Activated naive CD4-positive, alpha-beta T cell treated with anti-CD3 and anti-CD28 coated beads for 36 hours (primary cell): ENCODE measurements at regions of chr9 and their contacts with region 1.

Region 1: DNA sequence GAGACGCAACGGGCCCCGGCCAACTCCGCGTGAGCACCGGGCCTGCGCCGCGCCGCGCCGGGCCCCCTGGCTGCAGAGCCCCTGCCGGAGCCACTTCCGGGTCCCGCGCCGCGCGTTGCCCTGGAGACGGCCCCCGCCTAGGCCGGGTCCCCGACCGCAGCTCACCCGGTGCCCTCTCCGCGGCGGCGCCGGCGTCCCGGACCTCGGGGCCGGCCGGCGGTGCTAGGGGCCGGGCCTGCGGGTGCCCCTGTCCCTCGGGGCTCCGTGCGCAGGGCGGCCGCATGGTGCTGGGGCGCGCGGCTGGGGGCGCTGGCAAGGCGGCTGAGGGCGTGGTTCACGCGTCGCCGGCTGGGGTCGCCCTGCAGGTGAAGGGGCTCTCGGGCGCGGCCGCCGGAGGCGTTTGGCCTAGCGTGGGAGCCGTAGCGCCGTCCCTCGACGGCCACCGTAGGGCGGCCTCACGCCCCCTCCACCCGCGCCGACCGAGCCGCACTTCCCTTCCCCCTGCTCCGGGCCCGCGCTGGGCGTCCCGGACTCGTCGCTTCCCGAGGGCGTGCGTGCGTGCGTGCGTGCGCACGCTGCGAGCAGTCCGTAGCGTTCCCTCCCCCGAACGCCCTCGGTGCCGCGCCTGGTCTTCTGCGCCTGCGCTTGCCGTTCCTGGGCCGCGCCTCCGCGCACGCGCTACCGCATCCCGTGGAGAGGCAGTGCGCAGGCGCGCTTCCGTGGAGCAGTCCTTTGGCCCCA is at the start of gene TMEM250:
- DNase-seq: peak; percentile 96
- H3K4me3 Mint-ChIP-seq: peak within 1 kb of the TSS; percentile 78
- H3K27ac Mint-ChIP-seq: peak within 1 kb of the TSS; percentile 80
- H3K4me1 Mint-ChIP-seq: peaks cover 37% of the 10 kb centered on the region
- H3K27me3 Mint-ChIP-seq: no peaks in the 10 kb centered on the region
- total RNA-seq, gene TMEM250: 20.7 to 22.2 TPM

Region 2: DNA sequence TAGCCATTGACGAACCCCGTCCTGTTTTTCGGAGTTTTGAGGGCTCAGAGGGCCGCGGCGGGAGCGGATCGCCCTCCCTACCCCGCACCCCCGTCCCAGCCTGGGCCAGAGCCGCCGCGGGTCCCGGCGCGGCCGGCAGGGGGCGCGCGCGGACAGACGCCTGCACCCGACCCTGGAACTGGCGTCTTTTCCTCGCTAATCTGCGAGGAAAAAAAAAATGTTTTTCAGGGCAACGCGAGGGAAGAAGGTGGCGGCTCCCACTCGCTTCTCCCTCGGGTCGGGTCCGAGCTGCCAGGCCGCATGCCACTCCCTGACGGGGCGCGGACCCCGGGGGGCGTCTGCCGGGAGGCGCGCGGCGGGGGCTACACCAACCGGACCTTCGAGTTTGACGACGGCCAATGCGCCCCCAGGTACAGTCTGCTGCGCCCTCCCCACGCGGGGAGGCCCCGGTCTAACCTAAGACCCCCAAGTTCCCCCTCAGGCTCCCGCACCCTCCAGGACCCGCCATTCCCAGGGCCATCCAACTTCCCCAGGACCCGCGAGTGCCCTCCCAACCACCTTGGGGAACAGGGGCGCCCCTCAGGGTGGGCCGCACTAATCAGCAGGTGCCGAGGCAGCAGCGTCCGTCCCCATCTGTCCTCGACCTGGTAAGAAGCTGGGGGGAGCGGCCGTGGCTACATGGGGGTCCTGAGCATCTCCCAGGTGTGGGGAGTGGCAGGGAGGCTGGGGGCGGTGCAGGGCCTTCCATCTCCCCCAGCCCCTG is 416.4 kb before region 1 on chr9 and contains the start of gene KCNT1:
- CTCF ChIA-PET with region 1: no interaction called
- intact Hi-C with region 1: loop called (anchors 5 kb)
- DNase-seq: peak; percentile 62
- H3K4me3 Mint-ChIP-seq: no peak within 1 kb of the TSS
- H3K27ac Mint-ChIP-seq: no peak within 1 kb of the TSS
- H3K4me1 Mint-ChIP-seq: no peaks in the 10 kb centered on the region
- H3K27me3 Mint-ChIP-seq: peaks cover 5% of the 10 kb centered on the region
- total RNA-seq, gene KCNT1: not detected

Region 3: GRCh38 chr9:135857371-135857786 is 261.1 kb before region 1 on chr9:
- CTCF ChIA-PET with region 1: interaction called, 10 read pairs
- intact Hi-C with region 1: no loop called
- DNase-seq: no peak
- H3K4me3 Mint-ChIP-seq: no peak overlapping the region
- H3K27ac Mint-ChIP-seq: no peak overlapping the region
- H3K4me1 Mint-ChIP-seq: peaks cover 2% of the 10 kb centered on the region
- H3K27me3 Mint-ChIP-seq: no peaks in the 10 kb centered on the region

Region 4: GRCh38 chr9:135907431-135908092 is 210.9 kb before region 1 on chr9 and contains the start of gene CAMSAP1:
- CTCF ChIA-PET with region 1: no interaction called
- intact Hi-C with region 1: loop called (anchors 1 kb)
- DNase-seq: peak; percentile 94
- H3K4me3 Mint-ChIP-seq: peak within 1 kb of the TSS; percentile 80
- H3K27ac Mint-ChIP-seq: peak within 1 kb of the TSS; percentile 89
- H3K4me1 Mint-ChIP-seq: peaks cover 53% of the 10 kb centered on the region
- H3K27me3 Mint-ChIP-seq: no peaks in the 10 kb centered on the region
- total RNA-seq, gene CAMSAP1: 32.6 to 35.2 TPM

Region 5: DNA sequence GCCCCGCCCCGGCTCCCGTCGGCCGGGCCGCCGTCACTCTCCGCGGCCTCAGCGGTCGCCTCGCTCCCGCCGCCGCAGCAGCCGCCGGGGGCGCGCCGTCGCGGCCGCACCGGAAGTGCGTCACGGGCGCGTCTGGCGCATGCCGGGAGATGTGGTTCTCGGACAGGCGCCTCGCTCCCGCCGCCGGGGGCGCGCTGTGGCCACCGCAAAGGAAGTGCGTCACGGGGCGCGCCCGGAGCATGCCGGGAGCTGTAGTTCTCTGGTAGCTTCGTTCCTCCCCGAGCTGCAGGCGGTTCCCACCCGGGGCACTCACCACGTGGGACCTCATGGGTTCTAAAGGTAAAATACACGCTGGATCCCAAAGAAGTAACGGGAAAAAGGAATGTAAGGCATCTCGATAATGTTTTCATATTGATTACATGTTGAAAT is 157.2 kb before region 1 on chr9 and contains the start of gene UBAC1:
- CTCF ChIA-PET with region 1: interaction called, 69 read pairs
- intact Hi-C with region 1: loop called (anchors 1 kb)
- DNase-seq: peak; percentile 94
- H3K4me3 Mint-ChIP-seq: peak within 1 kb of the TSS; percentile 87
- H3K27ac Mint-ChIP-seq: peak within 1 kb of the TSS; percentile 50
- H3K4me1 Mint-ChIP-seq: peaks cover 32% of the 10 kb centered on the region
- H3K27me3 Mint-ChIP-seq: no peaks in the 10 kb centered on the region
- total RNA-seq, gene UBAC1: 37.2 to 40.0 TPM

Region 6: DNA sequence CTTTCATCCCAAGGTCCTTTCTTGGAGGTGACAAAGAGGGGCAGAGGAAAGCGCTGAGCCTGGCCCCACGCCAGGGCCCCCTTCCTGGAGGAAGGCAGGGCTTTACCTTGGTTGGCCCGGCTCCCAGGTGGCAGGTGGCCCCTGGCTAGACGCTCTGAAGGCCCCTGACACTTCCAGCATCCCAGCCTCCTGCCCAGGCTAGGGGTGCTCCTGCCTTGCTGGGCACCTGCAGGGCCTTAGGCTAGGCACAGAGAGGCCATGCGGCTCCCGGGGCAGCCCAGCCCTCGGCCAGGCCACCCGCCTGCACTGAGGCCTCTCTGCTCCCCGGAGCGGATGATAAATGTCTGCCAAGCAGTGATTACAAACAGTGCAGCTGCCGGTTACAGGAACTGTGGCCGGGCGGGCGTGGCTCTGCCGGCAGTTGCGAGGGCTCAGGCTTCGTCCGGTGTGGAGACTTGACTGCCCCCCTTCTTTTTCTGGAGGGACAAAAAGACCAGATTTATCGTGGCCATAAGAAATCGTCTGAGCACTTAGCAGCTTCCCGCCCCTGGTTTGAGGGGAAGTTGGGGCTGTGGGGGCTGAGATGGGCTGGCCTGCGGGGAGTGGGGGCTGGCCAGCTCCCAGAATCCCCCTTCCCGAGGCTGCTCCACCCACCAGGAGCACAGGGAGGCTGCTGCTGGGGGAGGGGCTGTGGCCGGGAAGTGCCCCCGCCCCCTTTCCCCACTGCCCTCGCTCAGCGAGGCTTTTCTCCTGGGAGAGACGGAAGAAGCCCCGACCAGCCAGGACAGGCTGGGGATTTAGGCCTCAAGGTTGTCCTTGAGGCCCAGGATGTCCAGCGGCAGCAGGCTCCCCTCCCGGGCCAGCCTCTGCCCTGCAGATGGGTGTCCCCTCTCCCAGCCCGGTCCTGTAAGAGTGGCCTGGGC is 125.7 kb before region 1 on chr9:
- CTCF ChIA-PET with region 1: no interaction called
- intact Hi-C with region 1: no loop called
- DNase-seq: peak; percentile 58
- H3K4me3 Mint-ChIP-seq: no peak overlapping the region
- H3K27ac Mint-ChIP-seq: no peak overlapping the region
- H3K4me1 Mint-ChIP-seq: peaks cover 20% of the 10 kb centered on the region
- H3K27me3 Mint-ChIP-seq: no peaks in the 10 kb centered on the region

Region 7: GRCh38 chr9:136093995-136094881 is 24.3 kb before region 1 on chr9:
- CTCF ChIA-PET with region 1: interaction called, 43 read pairs
- intact Hi-C with region 1: loop called (anchors 1 kb)
- DNase-seq: peak; percentile 64
- H3K4me3 Mint-ChIP-seq: peak overlapping the region; percentile 67
- H3K27ac Mint-ChIP-seq: no peak overlapping the region
- H3K4me1 Mint-ChIP-seq: peaks cover 17% of the 10 kb centered on the region
- H3K27me3 Mint-ChIP-seq: no peaks in the 10 kb centered on the region

Region 8: DNA sequence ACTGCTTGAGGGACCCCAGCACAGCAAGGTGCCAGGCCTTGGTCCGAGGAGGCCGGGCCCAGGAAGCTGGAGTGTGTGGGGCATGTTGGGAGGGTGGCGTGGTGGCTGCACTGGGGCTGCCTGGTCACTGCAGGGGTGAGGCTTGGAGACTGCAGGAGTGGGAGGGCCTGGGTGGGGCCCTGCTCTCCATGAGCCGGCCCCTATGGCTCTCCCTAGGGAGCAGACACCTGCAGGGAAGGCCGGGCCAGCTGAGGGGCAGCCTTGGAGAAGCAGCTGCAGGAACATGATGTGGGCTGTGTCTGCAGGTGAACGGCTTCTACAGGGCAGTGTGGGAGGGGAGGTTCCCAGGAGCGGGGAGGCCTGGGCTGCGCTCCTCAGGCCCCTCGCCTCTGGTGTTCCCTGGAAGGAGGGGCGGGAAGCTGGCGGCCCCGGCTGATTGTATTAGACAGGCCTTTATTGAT is 41.9 kb after region 1 on chr9:
- CTCF ChIA-PET with region 1: no interaction called
- intact Hi-C with region 1: no loop called
- DNase-seq: no peak
- H3K4me3 Mint-ChIP-seq: no peak overlapping the region
- H3K27ac Mint-ChIP-seq: no peak overlapping the region
- H3K4me1 Mint-ChIP-seq: no peaks in the 10 kb centered on the region
- H3K27me3 Mint-ChIP-seq: peaks cover 6% of the 10 kb centered on the region

Region 9: DNA sequence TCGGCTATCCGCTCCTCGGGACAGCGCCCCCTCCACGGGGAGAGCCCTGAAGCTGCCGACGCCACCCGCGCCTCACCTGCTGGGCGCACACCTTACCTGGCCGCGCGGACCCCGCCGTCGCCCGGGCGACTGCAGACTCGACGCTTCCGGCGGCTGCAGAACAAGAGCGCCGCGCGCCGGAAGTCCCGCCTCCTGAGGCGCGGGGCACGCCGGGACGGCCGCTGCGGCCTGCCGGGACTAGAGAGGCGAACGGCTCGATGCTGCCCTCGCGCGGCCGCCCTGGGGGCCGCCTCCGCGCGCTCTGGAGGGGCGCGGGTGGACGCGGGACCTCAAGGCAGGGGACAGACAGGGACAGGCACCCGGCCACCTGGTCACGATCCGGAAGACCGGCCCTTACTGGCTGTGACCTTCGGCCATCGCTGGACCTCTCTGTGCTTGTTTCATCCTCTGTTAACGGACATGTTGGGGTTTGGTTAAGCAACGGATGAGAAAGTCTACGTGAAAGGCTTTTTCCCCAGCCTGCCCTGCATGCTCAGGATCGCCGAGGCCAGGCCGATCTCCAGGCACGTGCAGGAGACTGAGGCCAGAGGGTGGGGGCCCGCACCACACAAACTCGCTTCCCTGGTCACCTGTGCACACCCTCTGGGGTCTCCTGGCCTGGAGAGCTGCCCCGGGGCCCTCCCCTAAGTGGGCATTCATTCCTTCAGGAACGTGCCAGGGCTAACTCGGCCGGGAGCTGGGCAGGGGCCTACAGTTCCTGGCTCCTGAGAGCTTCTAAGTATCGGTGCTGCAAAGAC is 281.7 kb after region 1 on chr9 and contains the start of gene SNAPC4:
- CTCF ChIA-PET with region 1: no interaction called
- intact Hi-C with region 1: loop called (anchors 5 kb)
- DNase-seq: peak; percentile 85
- H3K4me3 Mint-ChIP-seq: peak within 1 kb of the TSS; percentile 78
- H3K27ac Mint-ChIP-seq: peak within 1 kb of the TSS; percentile 59
- H3K4me1 Mint-ChIP-seq: peaks cover 57% of the 10 kb centered on the region
- H3K27me3 Mint-ChIP-seq: no peaks in the 10 kb centered on the region
- total RNA-seq, gene SNAPC4: 12.3 to 14.1 TPM